ENCODE measurements at regions of chr11 and their contacts with region 1.

Region 1: GRCh38 chr11:45500451-45500850 is 165.0 kb downstream of the CHST1 start:
- DNase-seq: no peak
- H3K4me3 ChIP-seq: no peak overlapping the region
- H3K27ac ChIP-seq: no peak overlapping the region
- H3K4me1 ChIP-seq: no peaks in the 10 kb centered on the region
- H3K27me3 ChIP-seq: peaks cover 56% of the 10 kb centered on the region
- CTCF ChIP-seq: no peak

Region 2: DNA sequence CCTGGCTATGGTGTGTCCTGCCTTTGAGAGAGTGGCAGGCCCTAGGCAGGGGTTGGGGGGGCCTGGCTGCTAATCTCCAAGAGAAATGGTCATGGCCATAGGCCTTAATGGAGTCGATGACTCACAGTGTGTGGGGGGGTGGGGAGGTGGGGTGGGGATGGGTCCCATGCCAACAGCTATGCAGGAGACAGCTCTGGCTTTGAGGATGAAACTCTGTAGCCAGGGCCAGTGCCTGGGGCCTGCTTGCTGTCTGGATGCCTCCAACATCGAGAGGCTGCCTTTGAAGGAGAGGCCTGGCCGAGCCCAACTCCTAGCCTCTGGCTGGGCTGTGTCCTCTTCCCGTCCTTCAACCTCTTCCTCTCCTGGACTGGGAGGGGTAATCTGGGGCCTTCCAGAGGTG is 797.6 kb before region 1 on chr11:
- CTCF ChIA-PET with region 1: no interaction called
- POLR2A ChIA-PET with region 1: interaction called, 11 read pairs
- intact Hi-C with region 1: no loop called
- DNase-seq: no peak
- H3K4me3 ChIP-seq: no peak overlapping the region
- H3K27ac ChIP-seq: no peak overlapping the region
- H3K4me1 ChIP-seq: no peaks in the 10 kb centered on the region
- H3K27me3 ChIP-seq: no peaks in the 10 kb centered on the region
- CTCF ChIP-seq: no peak

Region 3: DNA sequence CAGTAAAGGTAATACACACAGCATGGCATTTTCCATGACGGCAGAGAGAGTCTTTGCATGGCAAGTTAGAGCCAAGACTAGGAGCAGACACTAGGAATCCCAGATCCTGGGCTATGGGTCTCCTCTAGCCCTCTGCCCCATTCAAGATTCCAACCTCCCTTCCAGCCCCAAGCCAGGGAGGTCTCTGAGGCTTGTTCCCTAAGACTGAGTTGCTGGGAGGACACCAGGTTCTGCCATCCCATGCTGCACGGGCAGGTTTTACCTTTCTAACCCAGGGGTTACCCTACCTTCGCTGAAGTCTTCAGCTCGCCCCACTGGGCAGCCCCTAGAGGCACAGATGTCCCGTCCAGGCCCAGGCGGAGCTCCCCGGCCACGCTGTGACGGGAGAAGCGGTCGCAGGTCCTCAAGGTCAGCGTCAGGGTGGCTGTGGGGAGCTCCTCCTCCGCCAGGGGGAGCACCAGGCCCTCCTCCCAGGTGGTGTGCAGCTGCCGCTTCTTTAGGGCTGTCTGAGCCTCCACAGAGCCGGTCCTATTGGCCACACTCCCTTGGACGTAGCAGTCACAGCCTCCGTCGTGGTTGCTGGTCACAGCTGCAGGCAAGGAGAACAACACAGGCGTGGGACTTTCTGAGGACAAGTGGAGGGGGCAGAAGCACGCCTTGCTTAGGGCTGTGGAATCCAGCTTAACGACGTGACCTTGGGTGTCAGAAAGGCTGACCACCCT is 248.2 kb before region 1 on chr11:
- CTCF ChIA-PET with region 1: no interaction called
- POLR2A ChIA-PET with region 1: no interaction called
- intact Hi-C with region 1: no loop called
- DNase-seq: peak in 1 of 2 experiments; percentile 38
- H3K4me3 ChIP-seq: no peak overlapping the region
- H3K27ac ChIP-seq: no peak overlapping the region
- H3K4me1 ChIP-seq: no peaks in the 10 kb centered on the region
- H3K27me3 ChIP-seq: peaks cover 48% of the 10 kb centered on the region
- CTCF ChIP-seq: peak; percentile 76

Region 4: GRCh38 chr11:45485070-45485707 is 15.3 kb before region 1 on chr11:
- CTCF ChIA-PET with region 1: no interaction called
- POLR2A ChIA-PET with region 1: no interaction called
- intact Hi-C with region 1: no loop called
- DNase-seq: no peak
- H3K4me3 ChIP-seq: no peak overlapping the region
- H3K27ac ChIP-seq: no peak overlapping the region
- H3K4me1 ChIP-seq: no peaks in the 10 kb centered on the region
- H3K27me3 ChIP-seq: peaks cover 100% of the 10 kb centered on the region
- CTCF ChIP-seq: no peak

Measured in PC-9 (cell line).